HCT116 (cell line): ENCODE measurements at regions of chr22 and their contacts with region 1.

Region 1: DNA sequence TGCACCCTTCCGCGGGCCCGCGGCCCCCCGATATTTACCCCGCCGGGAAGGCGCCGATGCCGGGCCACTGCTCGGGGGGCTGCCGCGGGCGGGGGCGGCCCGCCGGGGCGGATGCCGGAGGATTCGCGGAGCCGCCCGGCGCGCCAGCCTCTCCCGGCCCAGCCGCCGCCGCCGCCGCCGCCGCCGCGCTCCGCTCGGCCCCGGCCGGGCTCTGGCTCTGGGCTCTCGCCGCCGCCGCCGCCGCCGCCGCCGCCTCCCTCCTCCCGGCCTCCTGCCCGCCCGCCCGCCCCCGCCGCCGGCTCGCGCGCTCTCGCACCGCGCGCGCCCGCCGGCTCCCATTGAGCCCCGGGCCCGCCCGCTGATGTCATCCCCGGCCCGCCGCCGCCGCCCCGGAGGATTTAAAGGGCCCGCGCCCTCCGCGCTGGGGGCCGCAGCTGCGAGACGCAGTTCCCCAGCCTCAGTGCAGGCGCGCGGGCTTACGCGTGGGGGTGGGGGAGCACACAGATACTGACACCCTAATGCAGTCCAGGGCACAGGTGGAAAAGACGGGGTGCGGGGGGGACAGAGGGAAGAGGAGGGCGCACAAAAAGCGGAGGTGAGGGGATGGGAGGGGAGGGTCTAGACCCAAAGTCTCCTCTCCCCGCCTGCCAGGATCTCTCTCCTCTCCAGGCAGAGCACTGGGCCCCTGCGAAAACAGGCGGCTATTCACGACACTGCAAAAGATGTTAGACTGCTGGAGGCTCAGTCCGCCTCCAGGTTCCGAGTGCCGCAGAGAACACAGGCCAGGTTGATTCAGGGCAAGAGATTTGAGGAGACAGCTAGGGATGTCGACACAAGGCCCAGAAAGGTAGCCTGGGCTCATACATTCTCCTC is at the start of gene CSNK1E:
- DNase-seq: no peak
- ATAC-seq: peak; percentile 54
- H3K4me3 ChIP-seq: peak within 1 kb of the TSS; percentile 72 to 78
- H3K27ac ChIP-seq: peak within 1 kb of the TSS; percentile 94
- H3K4me1 ChIP-seq: peaks cover 16 to 34% of the 10 kb centered on the region in 2 experiments
- H3K27me3 ChIP-seq: no peaks in the 10 kb centered on the region
- CTCF ChIP-seq: no peak
- POLR2A ChIP-seq: no peak
- RAD21 ChIP-seq: no peak
- total RNA-seq, gene CSNK1E: 190 TPM

Region 2: DNA sequence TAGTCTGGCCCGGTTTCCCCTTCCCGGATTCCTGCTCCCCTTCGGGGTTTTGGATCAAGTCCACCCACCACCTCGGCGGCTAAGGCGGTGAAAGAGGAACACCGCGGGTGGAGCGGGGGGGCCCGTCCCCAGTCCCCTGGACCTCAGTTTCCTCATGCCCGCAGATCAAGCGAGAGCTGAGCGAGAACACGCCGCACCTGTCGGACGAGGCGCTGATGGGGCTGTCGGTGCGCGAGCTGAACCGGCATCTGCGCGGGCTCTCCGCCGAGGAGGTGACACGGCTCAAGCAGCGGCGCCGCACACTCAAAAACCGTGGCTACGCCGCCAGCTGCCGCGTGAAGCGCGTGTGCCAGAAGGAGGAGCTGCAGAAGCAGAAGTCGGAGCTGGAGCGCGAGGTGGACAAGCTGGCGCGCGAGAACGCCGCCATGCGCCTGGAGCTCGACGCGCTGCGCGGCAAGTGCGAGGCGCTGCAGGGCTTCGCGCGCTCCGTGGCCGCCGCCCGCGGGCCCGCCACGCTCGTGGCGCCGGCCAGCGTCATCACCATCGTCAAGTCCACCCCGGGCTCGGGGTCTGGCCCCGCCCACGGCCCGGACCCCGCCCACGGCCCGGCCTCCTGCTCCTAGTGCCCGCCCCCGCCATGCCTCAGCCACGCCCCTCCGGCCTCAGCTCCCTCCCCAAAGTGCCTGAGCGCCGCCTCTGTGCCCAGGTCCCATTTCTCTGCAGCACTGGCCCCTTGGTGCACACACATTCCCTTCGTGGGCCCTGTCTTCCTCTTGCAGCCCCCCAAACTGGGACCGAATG is 102.9 kb before region 1 on chr22:
- CTCF ChIA-PET with region 1: no interaction called
- POLR2A ChIA-PET with region 1: no interaction called
- RAD21 ChIA-PET with region 1: no interaction called
- intact Hi-C with region 1: loop called (anchors 5 kb)
- DNase-seq: no peak
- ATAC-seq: peak; percentile 66
- H3K4me3 ChIP-seq: no peak overlapping the region
- H3K27ac ChIP-seq: no peak overlapping the region; the same call in 1 of the 2 replicates
- H3K4me1 ChIP-seq: peaks cover 22 to 50% of the 10 kb centered on the region in 2 experiments
- H3K27me3 ChIP-seq: no peaks in the 10 kb centered on the region
- CTCF ChIP-seq: no peak
- POLR2A ChIP-seq: no peak
- RAD21 ChIP-seq: no peak

Region 3: DNA sequence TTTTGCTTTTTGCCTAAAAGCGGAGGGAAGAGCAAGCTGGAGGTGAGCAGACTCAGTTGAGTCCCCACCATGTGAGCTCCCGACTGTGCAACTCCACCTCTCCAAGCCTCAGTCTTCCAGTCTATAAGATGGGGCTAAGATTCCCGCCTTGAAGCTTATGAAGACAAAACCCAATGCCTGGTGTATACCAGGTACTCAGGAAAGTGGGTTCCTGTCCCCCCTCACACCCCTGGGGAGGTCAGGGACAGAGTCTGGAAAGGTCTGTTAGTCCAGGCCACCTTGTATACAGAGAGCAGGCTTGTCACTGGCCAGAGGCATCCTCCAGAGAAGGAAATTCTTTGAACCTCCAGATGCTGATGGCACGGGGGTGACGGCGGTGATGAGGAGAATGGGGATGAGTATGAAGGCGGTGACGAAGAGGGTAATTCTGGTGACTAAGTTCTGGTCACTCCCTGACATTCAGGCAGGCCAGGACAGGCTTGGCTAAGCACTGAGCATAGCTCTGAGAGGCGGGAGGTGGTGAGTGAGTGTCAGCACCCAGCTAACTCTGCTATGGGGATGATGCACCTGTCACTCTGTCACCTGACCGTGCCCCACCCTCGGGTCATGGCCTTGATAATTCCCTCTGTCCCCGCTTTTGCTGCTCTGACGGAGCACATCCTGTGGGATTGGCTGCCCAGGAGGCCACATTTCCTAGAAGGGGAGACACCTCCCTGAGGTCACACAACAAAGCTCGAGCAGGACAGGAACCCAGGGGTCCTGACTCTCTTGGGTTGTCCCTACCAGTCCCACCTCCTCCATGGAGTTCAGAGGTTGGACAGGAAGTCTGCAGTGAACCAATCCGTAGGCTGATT is 30.8 kb after region 1 on chr22:
- CTCF ChIA-PET with region 1: no interaction called
- POLR2A ChIA-PET with region 1: no interaction called
- RAD21 ChIA-PET with region 1: no interaction called
- intact Hi-C with region 1: no loop called
- DNase-seq: no peak
- ATAC-seq: no peak
- H3K4me3 ChIP-seq: no peak overlapping the region
- H3K27ac ChIP-seq: no peak overlapping the region
- H3K4me1 ChIP-seq: no peaks in the 10 kb centered on the region
- H3K27me3 ChIP-seq: no peaks in the 10 kb centered on the region
- CTCF ChIP-seq: no peak
- POLR2A ChIP-seq: no peak
- RAD21 ChIP-seq: no peak